Activated naive CD4-positive, alpha-beta T cell treated with anti-CD3 and anti-CD28 coated beads for 36 hours (primary cell): ENCODE measurements at regions of chrX and their contacts with region 1.

Region 1: GRCh38 chrX:72620550-72621145 is 48.0 kb upstream of the HDAC8 start:
- DNase-seq: peak; percentile 64
- H3K4me3 Mint-ChIP-seq: no peak overlapping the region
- H3K27ac Mint-ChIP-seq: peak overlapping the region; percentile 90
- H3K4me1 Mint-ChIP-seq: peaks cover 21% of the 10 kb centered on the region
- H3K27me3 Mint-ChIP-seq: peaks cover 12% of the 10 kb centered on the region

Region 2: GRCh38 chrX:71111141-71111843 is 1509.4 kb before region 1 on chrX and contains the start of gene IL2RG:
- CTCF ChIA-PET with region 1: no interaction called
- intact Hi-C with region 1: loop called (anchors 5 kb)
- DNase-seq: peak; percentile 87
- H3K4me3 Mint-ChIP-seq: peak within 1 kb of the TSS; percentile 93
- H3K27ac Mint-ChIP-seq: peak within 1 kb of the TSS; percentile 95
- H3K4me1 Mint-ChIP-seq: peaks cover 37% of the 10 kb centered on the region
- H3K27me3 Mint-ChIP-seq: no peaks in the 10 kb centered on the region
- total RNA-seq, gene IL2RG: 144 to 148 TPM

Region 3: GRCh38 chrX:72276478-72276953 is 344.1 kb before region 1 on chrX:
- CTCF ChIA-PET with region 1: no interaction called
- intact Hi-C with region 1: loop called (anchors 1 kb)
- DNase-seq: no peak
- H3K4me3 Mint-ChIP-seq: peak overlapping the region; percentile 80
- H3K27ac Mint-ChIP-seq: peak overlapping the region; percentile 89
- H3K4me1 Mint-ChIP-seq: peaks cover 37% of the 10 kb centered on the region
- H3K27me3 Mint-ChIP-seq: no peaks in the 10 kb centered on the region

Region 4: DNA sequence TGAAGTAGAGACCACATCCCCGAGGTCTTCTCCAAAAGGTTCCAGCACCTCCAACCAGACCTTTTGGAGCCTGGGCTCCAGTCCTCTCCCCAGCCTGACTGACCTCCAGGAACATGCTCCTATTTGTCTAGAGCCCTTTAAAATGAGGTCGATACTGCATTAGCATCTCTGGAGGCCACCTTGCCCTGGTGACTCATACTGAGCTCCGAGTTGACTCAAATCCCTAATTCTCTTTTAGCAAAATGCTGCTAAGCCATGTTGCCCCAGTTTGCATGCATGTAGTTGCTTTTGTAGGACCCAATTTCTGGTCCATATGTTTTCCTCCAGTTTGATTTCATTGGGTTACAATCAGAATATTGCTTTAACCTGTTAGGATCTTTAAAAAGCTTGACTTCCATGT is 271.5 kb before region 1 on chrX:
- CTCF ChIA-PET with region 1: no interaction called
- intact Hi-C with region 1: loop called (anchors 2 kb)
- DNase-seq: peak; percentile 41
- H3K4me3 Mint-ChIP-seq: no peak overlapping the region
- H3K27ac Mint-ChIP-seq: no peak overlapping the region
- H3K4me1 Mint-ChIP-seq: peaks cover 14% of the 10 kb centered on the region
- H3K27me3 Mint-ChIP-seq: no peaks in the 10 kb centered on the region

Region 5: GRCh38 chrX:72498782-72499181 is 121.9 kb before region 1 on chrX:
- CTCF ChIA-PET with region 1: no interaction called
- intact Hi-C with region 1: no loop called
- DNase-seq: no peak
- H3K4me3 Mint-ChIP-seq: no peak overlapping the region
- H3K27ac Mint-ChIP-seq: no peak overlapping the region
- H3K4me1 Mint-ChIP-seq: no peaks in the 10 kb centered on the region
- H3K27me3 Mint-ChIP-seq: no peaks in the 10 kb centered on the region

Region 6: GRCh38 chrX:72604112-72604511 is 16.5 kb before region 1 on chrX:
- CTCF ChIA-PET with region 1: interaction called, 5 read pairs
- intact Hi-C with region 1: loop called (anchors 1 kb)
- DNase-seq: no peak
- H3K4me3 Mint-ChIP-seq: no peak overlapping the region
- H3K27ac Mint-ChIP-seq: no peak overlapping the region
- H3K4me1 Mint-ChIP-seq: peaks cover 2% of the 10 kb centered on the region
- H3K27me3 Mint-ChIP-seq: no peaks in the 10 kb centered on the region

Region 7: GRCh38 chrX:72705111-72705510 is 84.5 kb after region 1 on chrX:
- CTCF ChIA-PET with region 1: no interaction called
- intact Hi-C with region 1: no loop called
- DNase-seq: no peak
- H3K4me3 Mint-ChIP-seq: no peak overlapping the region
- H3K27ac Mint-ChIP-seq: no peak overlapping the region
- H3K4me1 Mint-ChIP-seq: no peaks in the 10 kb centered on the region
- H3K27me3 Mint-ChIP-seq: no peaks in the 10 kb centered on the region

Region 8: DNA sequence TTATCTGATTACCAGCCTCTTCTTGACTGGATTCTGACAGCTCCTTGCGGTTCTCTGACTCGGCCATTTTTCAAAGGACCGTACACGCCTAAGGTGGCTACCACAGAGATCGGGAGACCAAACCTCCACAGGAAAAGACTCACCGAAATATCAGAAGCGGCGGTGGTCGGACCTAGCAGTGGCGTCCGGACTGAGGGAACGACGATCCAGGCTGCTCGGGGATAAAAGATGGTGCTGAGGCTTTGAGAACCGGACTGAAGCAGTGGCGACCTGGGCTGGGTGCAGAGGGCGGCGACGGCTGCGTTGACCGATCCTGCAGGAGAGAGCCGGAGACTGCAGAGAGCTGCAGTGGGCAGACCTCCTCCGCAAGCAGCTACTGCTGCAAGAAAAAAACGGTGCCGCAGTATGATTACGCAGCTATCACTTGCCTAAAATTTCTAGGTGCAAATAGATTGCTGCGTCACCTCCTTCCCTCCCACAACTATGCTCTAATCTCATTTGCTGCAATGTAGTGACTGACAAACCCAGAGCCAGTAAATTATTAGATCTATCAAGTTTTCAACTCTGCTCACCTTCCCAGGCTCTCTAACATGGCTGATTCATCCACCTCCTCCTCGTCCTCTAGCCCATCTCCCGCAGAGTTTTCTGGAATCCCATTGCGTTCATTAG is 593.9 kb after region 1 on chrX and contains the start of gene NAP1L2:
- CTCF ChIA-PET with region 1: no interaction called
- intact Hi-C with region 1: loop called (anchors 1 kb)
- DNase-seq: peak; percentile 59
- H3K4me3 Mint-ChIP-seq: peak within 1 kb of the TSS; percentile 91
- H3K27ac Mint-ChIP-seq: peak within 1 kb of the TSS; percentile 91
- H3K4me1 Mint-ChIP-seq: peaks cover 19% of the 10 kb centered on the region
- H3K27me3 Mint-ChIP-seq: peaks cover 3% of the 10 kb centered on the region
- total RNA-seq, gene NAP1L2: 2.5 to 2.7 TPM